Esophagus squamous epithelium (tissue), 5 donors: ENCODE measurements at regions of chr9 and their contacts with region 1.

Region 1: GRCh38 chr9:706606-707459 is 134.7 kb upstream of the DMRT1 start:
- DNase-seq: no peak
- H3K4me3 ChIP-seq: peak overlapping the region; percentile 33 to 85 (median 56)
- H3K27ac ChIP-seq: peak overlapping the region; percentile 81 to 94 (median 88)
- H3K4me1 ChIP-seq: peaks cover 20 to 86% (median 32%) of the 10 kb centered on the region in 3 donors
- H3K27me3 ChIP-seq: no peaks in the 10 kb centered on the region
- CTCF ChIP-seq: no peak
- POLR2A ChIP-seq: peak in 2 of 4 donors; percentile 17 to 21

Region 2: DNA sequence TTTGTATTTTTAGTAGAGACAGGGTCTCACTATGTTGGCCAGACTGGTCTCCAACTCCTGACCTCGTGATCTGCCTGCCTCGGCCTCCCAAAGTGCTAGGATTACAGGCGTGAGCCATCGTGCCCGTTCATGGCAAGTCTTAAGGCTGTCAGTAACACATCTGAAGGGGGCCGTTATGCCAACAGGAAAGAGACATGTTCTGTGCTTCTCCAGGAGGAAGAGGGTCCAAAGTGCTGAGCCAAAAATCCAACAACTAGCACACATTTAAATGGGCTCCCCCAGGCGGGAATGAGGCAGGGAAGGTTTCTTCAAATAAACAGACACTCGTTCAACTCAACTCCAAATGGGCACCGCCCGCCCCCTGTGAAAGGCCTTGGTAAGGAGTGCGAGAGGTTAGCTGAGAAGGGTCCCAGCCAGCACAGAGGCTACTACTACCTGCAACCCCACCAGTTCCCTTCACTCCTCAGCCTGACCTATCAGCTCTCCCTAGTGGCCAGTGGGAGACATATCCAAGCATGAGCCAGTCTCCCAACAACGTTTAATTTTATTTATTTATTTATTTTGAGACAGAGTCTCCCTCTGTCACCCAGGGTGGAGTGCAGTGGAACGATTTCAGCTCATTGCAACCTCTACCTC is 50.5 kb after region 1 on chr9:
- intact Hi-C with region 1: loop called (anchors 10 kb)
- DNase-seq: no peak
- H3K4me3 ChIP-seq: no peak overlapping the region
- H3K27ac ChIP-seq: no peak overlapping the region
- H3K4me1 ChIP-seq: peaks cover 13 to 70% (median 15%) of the 10 kb centered on the region in 3 donors
- H3K27me3 ChIP-seq: no peaks in the 10 kb centered on the region
- CTCF ChIP-seq: peak in 5 of 6 experiments; percentile 45 to 71 (median 58)
- POLR2A ChIP-seq: no peak